CD4-positive, alpha-beta memory T cell (primary cell): ENCODE measurements at regions of chr2 and their contacts with region 1.

Region 1: GRCh38 chr2:70086838-70087701 is at the start of gene PCBP1:
- DNase-seq: peak; percentile 93 to 99 (median 97)
- H3K4me3 ChIP-seq: peak within 1 kb of the TSS; percentile 74 to 84
- H3K4me3 Mint-ChIP-seq: peak within 1 kb of the TSS; percentile 93 to 99 (median 96)
- H3K27ac ChIP-seq: peak within 1 kb of the TSS; percentile 99
- H3K27ac Mint-ChIP-seq: peak within 1 kb of the TSS; percentile 99 to 100 (median 100)
- H3K4me1 ChIP-seq: peaks cover 68% of the 10 kb centered on the region
- H3K4me1 Mint-ChIP-seq: peaks cover 47 to 93% (median 59%) of the 10 kb centered on the region in 4 donors
- H3K27me3 ChIP-seq: no peaks in the 10 kb centered on the region
- H3K27me3 Mint-ChIP-seq: peaks cover 3% of the 10 kb centered on the region in 2 donors
- total RNA-seq, gene PCBP1: 372 to 383 TPM

Region 2: GRCh38 chr2:69724540-69725159 is 362.4 kb before region 1 on chr2:
- CTCF ChIA-PET with region 1: no interaction called
- POLR2A ChIA-PET with region 1: no interaction called
- intact Hi-C with region 1: loop called (anchors 10 kb)
- DNase-seq: peak; percentile 74 to 80 (median 77)
- H3K4me3 ChIP-seq: no peak overlapping the region
- H3K4me3 Mint-ChIP-seq: peak overlapping the region in 7 of 8 donors; percentile 38 to 70 (median 60)
- H3K27ac ChIP-seq: no peak overlapping the region
- H3K27ac Mint-ChIP-seq: no peak overlapping the region
- H3K4me1 ChIP-seq: peaks cover 7% of the 10 kb centered on the region
- H3K4me1 Mint-ChIP-seq: peaks cover 4 to 7% (median 6%) of the 10 kb centered on the region in 4 donors
- H3K27me3 ChIP-seq: no peaks in the 10 kb centered on the region
- H3K27me3 Mint-ChIP-seq: no peaks in the 10 kb centered on the region

Region 3: GRCh38 chr2:70070541-70071268 is 16.4 kb before region 1 on chr2:
- CTCF ChIA-PET with region 1: interaction called, 109 read pairs
- POLR2A ChIA-PET with region 1: interaction called, 317 read pairs
- intact Hi-C with region 1: loop called (anchors 1 kb)
- DNase-seq: peak; percentile 75 to 81 (median 79)
- H3K4me3 ChIP-seq: peak overlapping the region in 1 of 2 donors; percentile 1
- H3K4me3 Mint-ChIP-seq: peak overlapping the region; percentile 67 to 91 (median 80)
- H3K27ac ChIP-seq: peak overlapping the region; percentile 82
- H3K27ac Mint-ChIP-seq: peak overlapping the region; percentile 81 to 99 (median 98)
- H3K4me1 ChIP-seq: peaks cover 39% of the 10 kb centered on the region
- H3K4me1 Mint-ChIP-seq: peaks cover 36 to 55% (median 46%) of the 10 kb centered on the region in 4 donors
- H3K27me3 ChIP-seq: no peaks in the 10 kb centered on the region
- H3K27me3 Mint-ChIP-seq: no peaks in the 10 kb centered on the region

Region 4: GRCh38 chr2:70124983-70125480 is 38.0 kb after region 1 on chr2:
- CTCF ChIA-PET with region 1: interaction called, 33 read pairs
- POLR2A ChIA-PET with region 1: interaction called, 2,231 read pairs
- intact Hi-C with region 1: loop called (anchors 1 kb)
- DNase-seq: peak in 2 of 5 donors; percentile 75 to 82
- H3K4me3 ChIP-seq: peak overlapping the region; percentile 29 to 99
- H3K4me3 Mint-ChIP-seq: peak overlapping the region; percentile 89 to 99 (median 94)
- H3K27ac ChIP-seq: peak overlapping the region; percentile 97
- H3K27ac Mint-ChIP-seq: peak overlapping the region; percentile 95 to 100 (median 100)
- H3K4me1 ChIP-seq: peaks cover 64% of the 10 kb centered on the region
- H3K4me1 Mint-ChIP-seq: peaks cover 34 to 73% (median 57%) of the 10 kb centered on the region in 4 donors
- H3K27me3 ChIP-seq: no peaks in the 10 kb centered on the region
- H3K27me3 Mint-ChIP-seq: peaks cover 0 to 3% of the 10 kb centered on the region in 2 donors

Region 5: DNA sequence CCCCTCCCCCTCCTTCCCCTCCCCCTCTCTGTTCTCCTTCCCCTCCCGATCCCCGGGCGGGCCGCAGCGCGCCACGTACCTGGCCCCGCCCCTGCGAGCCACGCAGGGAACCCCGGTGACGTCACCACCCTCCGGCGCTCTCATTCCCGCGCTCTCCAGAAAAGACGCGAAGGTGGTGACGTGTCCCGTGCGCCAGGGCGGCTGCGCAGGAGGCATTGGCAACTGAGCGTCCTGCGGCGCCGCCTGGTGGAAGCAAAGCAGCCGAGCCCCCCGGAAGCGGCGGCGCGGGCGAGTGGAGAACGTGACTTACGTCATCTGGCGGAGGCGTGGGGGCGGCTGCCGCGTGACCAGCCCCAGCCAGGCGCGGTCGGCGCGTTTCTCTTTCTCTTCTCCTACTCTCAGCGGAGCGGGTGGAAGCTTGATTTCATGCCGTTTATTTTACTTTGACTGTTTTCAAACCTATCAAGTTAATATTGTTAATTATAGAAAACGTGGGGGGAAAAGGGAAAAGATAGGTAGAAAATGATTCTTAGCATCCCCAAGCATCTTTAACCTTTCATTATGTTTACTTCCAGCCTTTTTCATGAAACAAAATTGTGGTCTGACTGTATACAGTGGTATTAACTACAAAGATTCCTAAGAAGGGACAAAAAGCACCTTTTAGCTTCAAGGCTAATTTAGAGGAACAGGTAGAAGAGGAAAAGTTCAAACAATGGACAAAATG is 55.7 kb after region 1 on chr2:
- CTCF ChIA-PET with region 1: interaction called, 17 read pairs
- POLR2A ChIA-PET with region 1: interaction called, 2,231 read pairs
- intact Hi-C with region 1: loop called (anchors 1 kb)
- DNase-seq: peak; percentile 99 to 100 (median 100)
- H3K4me3 ChIP-seq: peak overlapping the region in 1 of 2 donors; percentile 67
- H3K4me3 Mint-ChIP-seq: peak overlapping the region; percentile 85 to 96 (median 90)
- H3K27ac ChIP-seq: peak overlapping the region; percentile 97
- H3K27ac Mint-ChIP-seq: peak overlapping the region; percentile 97 to 100 (median 100)
- H3K4me1 ChIP-seq: peaks cover 56% of the 10 kb centered on the region
- H3K4me1 Mint-ChIP-seq: peaks cover 38 to 67% (median 52%) of the 10 kb centered on the region in 4 donors
- H3K27me3 ChIP-seq: no peaks in the 10 kb centered on the region
- H3K27me3 Mint-ChIP-seq: peaks cover 0 to 2% of the 10 kb centered on the region in 2 donors

Region 6: DNA sequence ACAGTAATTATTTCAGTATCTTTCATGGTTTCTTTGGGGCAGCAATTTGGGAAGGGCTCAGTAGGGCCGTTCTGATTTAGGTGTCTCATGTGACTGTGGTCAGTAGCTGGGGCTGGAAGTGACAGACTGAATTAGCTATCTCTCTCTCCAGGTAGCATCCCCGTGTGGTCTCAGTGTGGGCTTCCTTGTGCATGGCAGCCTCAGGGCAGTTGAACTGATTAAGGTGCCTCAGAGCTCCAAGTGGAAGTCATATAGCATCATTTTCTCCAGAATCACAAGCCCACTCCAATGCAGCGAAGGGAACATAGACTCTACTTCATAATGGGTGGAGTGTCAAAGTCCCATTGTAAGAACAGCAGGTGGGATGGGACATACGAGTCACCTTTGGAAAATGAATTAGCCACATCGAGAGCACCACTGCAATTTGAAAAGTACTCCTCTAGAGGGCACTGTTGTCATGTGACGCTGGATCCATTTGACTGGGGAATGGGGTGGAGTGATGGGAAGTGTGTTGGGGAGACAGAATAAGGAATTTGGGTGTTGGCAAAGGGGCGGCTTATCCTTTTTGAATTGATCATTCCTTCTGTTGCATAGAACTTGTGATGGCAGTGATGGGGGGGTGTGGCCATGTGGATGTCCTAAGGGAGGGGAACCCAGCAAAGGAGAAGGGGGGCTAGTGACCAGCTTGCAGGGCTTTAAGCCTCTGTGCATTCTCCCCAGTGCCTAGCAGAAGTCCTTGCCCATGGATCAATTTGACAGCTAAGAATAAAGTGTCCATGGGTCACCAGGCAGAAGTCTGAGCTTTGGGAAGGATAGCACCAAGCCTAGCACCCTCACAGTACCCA is 254.1 kb after region 1 on chr2:
- CTCF ChIA-PET with region 1: no interaction called
- POLR2A ChIA-PET with region 1: no interaction called
- intact Hi-C with region 1: no loop called
- DNase-seq: peak; percentile 41 to 50 (median 47)
- H3K4me3 ChIP-seq: no peak overlapping the region
- H3K4me3 Mint-ChIP-seq: peak overlapping the region in 1 of 8 donors; percentile 0
- H3K27ac ChIP-seq: no peak overlapping the region
- H3K27ac Mint-ChIP-seq: no peak overlapping the region
- H3K4me1 ChIP-seq: no peaks in the 10 kb centered on the region
- H3K4me1 Mint-ChIP-seq: peaks cover 0 to 2% (median under 1%) of the 10 kb centered on the region in 4 donors
- H3K27me3 ChIP-seq: no peaks in the 10 kb centered on the region
- H3K27me3 Mint-ChIP-seq: peaks cover 5 to 12% of the 10 kb centered on the region in 2 donors